ENCODE measurements at regions of chr6 and their contacts with region 1.

Region 1: DNA sequence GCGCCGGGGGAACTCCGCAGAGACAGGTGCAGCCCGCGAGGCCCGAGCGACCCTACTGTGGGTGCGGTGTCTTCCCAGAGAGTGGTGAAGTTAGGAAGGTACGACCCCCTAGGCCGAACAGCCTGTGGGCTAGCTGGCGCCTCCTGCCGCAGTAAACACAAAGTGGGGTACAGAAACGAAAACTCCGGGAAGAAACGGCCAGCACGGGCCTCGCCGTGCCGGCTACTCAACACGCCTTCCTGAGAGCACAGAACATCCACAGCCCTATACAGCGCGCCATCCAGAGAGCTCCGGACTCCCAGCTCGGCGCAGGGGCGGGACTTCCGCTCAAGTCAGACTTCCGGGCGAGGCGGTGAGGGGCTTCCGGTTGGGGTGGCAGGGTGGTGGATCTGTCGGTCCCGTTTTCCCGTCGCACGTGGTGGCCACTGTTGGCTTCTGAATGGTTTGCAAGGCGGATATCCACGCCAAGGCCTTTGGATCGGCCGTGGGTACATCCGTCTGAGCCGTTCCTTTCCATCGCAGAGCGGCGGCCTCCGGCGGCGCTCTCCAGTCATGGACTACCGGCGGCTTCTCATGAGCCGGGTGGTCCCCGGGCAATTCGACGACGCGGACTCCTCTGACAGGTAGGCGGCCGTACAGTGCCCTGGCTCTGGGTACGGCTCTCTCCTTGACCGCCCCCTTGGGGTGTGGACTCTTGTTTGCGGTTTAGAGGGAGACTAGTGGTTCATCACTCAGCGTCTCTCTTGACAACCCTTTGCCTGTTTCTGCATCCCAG is at the starts of genes CAGE1 and RIOK1:
- DNase-seq: peak; percentile 98
- ATAC-seq: peak; percentile 100
- total RNA-seq, gene CAGE1: 0.11 TPM
- total RNA-seq, gene RIOK1: 12.4 TPM

Region 2: GRCh38 chr6:7282097-7282906 is 107.3 kb before region 1 on chr6:
- intact Hi-C with region 1: loop called (anchors 10 kb)
- DNase-seq: no peak
- ATAC-seq: no peak

Region 3: DNA sequence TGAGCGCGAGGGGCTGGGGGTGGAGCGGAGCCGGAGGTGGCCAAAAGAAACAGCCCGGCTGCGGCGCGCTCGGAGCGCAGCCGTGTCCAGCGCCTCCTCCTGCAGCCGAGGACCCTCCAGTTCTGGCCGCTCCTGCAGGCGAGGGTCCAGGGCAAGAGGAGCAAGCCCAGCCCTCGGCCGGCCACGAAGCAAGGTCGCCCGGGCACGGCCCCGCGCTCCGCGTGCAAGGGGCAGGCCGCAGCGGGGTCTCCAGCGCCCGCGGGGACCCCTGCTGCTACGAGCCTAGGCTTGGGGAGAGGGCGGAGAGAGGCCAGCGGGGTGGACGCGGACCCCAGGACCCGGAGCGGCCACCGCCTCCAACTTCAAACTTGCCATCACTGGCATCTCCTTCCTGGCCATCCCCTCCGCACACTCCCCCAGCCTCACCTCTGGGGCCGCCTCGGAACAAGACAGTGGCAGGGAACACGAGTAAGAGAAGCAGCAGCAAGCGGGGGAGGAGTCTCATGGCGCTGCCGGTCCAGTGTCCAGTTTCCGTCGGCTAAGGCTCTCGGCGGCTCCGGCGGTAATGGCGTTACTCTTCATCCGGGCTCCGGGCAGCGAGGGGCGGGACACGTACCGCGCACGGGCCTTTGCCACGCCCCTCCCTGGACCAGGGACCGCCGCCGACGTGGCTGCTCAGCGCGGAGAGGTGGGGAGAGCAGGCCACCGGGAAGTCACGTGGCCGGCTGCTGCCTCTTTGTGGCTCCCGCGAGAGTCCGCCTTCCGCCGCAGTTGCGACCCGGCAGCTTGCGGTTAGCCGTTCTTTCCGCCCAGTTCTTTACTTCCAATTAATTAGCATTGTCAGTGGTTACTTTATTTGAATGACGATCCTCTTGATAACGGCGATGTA is 76.8 kb before region 1 on chr6 and contains the start of gene SSR1:
- intact Hi-C with region 1: loop called (anchors 1 kb)
- DNase-seq: peak; percentile 99
- ATAC-seq: peak; percentile 100
- total RNA-seq, gene SSR1: 58.5 TPM

Region 4: GRCh38 chr6:7373739-7374138 is 15.9 kb before region 1 on chr6:
- intact Hi-C with region 1: no loop called
- DNase-seq: no peak
- ATAC-seq: no peak